Sciatic nerve (tissue), 2 donors: ENCODE measurements at regions of chr11 and their contacts with region 1.

Region 1: GRCh38 chr11:62665075-62665598 is at the starts of genes C11orf98 and CSKMT:
- DNase-seq: peak; percentile 98
- ATAC-seq: peak; percentile 99
- total RNA-seq, gene C11orf98: 25.1 TPM
- total RNA-seq, gene CSKMT: 7.1 TPM

Region 2: GRCh38 chr11:60915248-60915914 is 1749.8 kb before region 1 on chr11:
- intact Hi-C with region 1: loop called (anchors 5 kb)
- DNase-seq: no peak
- ATAC-seq: peak; percentile 51